Cardiac septum (tissue), 1 donor: ENCODE measurements at regions of chr15 and their contacts with region 1.

Region 1: GRCh38 chr15:39756806-39757522 is 25.7 kb downstream of the FSIP1 start:
- DNase-seq: no peak

Region 2: DNA sequence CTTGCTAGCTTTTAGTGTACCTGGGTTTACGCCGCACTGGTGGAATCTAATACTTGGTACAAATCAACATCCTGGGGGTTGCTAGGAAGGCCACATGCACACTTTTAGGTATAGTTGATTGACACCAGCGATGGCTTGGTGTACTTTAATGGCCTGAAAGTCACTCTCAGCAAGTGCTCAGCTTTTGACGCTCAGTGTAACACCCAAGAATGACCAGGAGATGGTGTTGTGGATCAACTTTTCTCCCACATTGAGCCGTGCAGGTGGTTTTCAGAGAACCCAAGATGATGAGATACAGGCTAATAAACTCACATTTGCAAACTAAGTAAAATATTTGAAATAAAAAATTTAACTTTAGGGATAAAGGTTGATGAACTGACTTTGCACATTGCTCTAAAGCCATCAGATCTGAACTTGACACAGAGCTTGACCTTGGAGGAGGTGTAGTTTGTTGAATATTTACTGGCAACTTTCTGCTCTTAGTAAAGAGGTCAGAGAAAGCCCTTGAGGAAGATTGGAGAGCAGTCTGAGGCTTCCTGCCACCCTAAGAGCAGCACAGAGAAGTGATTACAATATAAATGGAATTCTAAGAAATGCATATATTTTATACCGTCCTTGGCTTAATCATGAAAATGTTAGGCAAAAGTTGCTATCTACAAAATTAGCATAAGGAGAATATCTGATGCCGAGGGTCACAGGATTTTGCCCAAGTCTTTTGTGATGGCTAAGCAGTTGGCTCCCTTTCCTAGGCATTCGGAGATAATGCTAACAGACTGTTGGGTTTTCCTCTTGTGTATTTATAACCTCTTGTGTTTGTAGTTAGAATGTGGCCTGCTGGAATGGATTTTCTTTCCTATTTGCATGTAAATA is 1048.9 kb before region 1 on chr15:
- intact Hi-C with region 1: loop called (anchors 5 kb)
- DNase-seq: no peak

Region 3: GRCh38 chr15:39171944-39172368 is 585.0 kb before region 1 on chr15:
- intact Hi-C with region 1: loop called (anchors 10 kb)
- DNase-seq: no peak

Region 4: DNA sequence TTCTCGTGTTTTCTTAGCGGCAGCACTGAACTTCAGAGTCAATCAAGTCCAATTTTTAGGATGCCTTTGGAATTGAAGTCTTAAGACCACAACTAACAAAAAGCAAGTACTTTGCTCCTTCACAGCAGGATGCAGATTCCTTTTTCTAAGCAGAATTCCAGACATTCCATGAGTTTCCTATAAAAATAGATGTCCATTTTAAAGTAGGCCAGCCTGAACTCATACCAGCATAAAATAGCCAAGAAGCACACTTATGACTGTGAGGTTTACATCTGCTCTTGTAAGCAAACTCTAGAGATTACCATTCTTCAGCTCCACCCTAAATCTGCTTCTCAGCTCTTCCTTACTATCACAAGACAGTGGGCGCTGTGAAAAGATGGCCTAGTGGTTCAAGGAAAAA is 90.3 kb before region 1 on chr15:
- intact Hi-C with region 1: no loop called
- DNase-seq: no peak

Region 5: DNA sequence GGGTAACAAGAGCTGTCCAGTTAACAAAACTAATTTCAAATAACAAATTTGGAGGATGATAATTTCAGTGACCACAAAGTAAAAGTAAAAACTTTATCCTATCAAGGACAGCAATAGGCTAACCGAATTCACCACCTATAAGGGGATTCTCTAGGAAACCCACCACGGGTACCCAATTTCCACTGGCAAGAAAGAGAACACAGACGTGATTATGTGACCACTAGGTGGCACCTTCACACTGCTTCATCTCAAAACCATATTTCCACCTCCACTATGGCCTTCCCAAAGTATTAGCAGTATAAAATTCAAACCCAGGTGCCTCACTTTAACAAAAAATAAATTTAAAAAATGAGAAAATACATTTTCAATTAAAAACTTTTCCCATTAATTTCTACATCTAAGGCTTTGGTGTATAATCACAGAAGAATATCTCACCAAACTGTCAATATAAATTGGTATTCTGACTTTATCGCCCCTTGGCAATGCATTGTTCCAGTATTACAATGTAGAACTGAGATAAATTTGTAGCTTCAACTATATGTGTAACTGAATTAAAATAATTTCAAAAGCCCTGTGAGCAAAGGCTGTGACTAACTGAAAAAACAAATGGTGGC is 70.9 kb before region 1 on chr15:
- intact Hi-C with region 1: loop called (anchors 1 kb)
- DNase-seq: no peak

Region 6: GRCh38 chr15:39874890-39875549 is 118.1 kb after region 1 on chr15:
- intact Hi-C with region 1: no loop called
- DNase-seq: no peak